Activated CD4-positive, alpha-beta memory T cell treated with anti-CD3 and anti-CD28 coated beads, Interleukin-2, amount 10 ng/mL, durations not matched to agents 7 days and 5 days (primary cell): ENCODE measurements at regions of chr7 and their contacts with region 1.

Region 1: DNA sequence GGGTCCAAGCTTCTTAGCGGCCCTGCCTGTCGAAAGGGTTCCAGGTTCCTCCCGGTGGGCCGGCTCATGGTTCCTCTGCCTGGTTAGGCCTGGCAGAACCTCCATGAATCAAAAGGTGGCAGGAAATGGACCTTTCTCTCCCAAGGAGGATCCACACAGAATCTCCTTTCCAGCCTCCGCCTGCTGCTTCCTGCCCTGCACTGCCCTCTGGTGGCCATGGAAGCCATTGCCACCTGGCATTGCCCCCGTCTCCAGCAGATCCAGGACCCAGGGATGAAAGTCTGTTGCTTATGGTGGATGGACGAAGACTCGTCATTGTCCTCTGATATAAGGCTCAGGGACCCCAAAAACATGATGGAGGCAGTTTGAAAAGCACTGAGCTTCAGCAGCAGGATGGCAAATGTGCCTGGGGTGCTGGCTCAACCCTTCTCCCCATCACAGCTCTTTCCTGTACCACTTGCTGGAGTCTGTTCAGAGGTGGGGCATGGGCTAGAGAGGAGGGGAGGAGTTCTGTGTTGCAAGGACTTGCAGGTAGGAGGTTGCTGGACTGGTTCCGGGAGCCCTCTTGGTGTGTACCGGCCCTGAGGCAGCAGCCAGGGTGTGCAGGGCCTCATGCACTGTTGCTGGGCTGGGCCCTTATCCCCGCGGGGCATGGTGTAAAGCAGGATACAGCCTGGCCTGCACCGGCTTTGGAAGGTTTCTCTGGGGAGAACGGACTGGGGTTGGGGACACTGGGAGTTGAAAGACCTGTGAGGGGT is 11.3 kb upstream of the INMT start:
- DNase-seq: peak; percentile 81
- H3K4me3 Mint-ChIP-seq: no peak overlapping the region
- H3K27ac Mint-ChIP-seq: no peak overlapping the region
- H3K4me1 Mint-ChIP-seq: peaks cover 33% of the 10 kb centered on the region
- H3K27me3 Mint-ChIP-seq: no peaks in the 10 kb centered on the region

Region 2: DNA sequence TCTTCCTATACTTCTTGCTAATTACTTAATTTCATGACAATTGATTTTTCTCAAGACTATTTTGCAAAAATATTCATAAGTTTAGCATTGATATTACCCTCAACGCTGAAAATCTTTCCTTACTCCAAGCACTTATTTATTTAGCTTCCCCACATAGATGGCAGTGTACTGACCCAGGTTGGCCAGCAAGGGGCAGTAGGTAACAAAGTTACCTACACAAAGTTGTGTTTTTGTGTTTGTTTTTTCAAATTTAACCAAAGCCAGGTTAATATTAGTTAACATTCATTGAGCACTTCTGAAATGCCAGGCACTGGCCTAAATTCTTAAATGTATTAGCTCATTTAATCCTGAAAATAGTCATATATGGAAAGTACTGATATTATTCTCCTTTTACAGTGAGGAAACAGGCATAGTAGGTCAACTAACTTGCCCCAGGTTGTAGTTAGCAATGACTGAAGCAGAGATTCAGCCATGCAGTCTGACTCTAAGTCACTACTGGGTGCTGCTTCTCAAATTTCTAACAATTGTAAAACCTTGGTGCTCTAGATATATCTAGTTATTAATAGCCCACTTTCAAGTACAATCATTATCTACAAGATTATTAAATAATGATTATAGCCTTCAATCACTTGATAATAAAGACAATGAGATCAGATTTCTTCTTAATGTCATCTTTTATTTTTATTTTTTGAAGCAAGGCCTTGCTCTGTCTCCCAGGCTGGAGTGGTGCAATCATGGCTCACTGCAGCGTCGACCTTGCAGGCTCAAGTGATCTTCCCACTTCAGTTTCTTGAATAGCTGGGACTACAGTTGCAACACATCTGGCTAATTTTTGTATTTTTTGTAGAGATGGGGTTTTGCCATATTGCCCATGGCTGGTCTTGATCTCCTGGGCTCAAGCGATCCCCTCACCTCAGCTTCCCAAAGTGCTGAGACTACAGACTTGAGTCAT is 230.2 kb before region 1 on chr7:
- CTCF ChIA-PET with region 1: interaction called, 11 read pairs
- POLR2A ChIA-PET with region 1: no interaction called
- DNase-seq: peak; percentile 40
- H3K4me3 Mint-ChIP-seq: no peak overlapping the region
- H3K27ac Mint-ChIP-seq: no peak overlapping the region
- H3K4me1 Mint-ChIP-seq: peaks cover 21% of the 10 kb centered on the region
- H3K27me3 Mint-ChIP-seq: no peaks in the 10 kb centered on the region

Region 3: DNA sequence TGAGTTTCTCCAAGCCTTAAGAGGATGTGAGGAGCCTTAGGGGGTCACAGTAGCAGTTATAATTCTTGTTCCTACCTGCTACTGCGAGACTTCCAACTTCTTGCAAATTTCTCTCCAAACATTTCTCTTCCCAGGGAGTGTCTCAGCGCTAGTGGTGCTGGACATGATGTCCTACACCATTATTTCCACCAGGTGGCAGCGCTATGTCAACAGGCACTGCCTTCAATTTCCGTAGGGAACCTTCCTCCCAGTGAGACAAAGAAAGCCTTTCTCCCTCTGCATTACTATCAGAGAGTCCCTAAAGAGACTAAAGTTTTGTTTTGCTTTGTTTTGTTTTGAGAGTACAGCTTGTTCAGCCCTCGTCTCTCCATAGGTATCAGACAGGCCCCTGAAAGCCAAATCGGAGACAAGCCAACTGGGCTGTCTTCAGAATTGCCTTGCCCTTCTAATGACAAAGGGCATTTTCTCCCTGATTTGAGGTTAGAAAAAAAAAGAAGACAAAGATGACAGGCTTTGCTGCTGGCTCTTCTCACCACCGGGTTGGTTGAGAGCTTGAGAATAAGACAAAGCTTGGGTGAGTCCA is 191.8 kb before region 1 on chr7:
- CTCF ChIA-PET with region 1: interaction called, 14 read pairs
- POLR2A ChIA-PET with region 1: no interaction called
- DNase-seq: peak; percentile 40
- H3K4me3 Mint-ChIP-seq: no peak overlapping the region
- H3K27ac Mint-ChIP-seq: no peak overlapping the region
- H3K4me1 Mint-ChIP-seq: peaks cover 2% of the 10 kb centered on the region
- H3K27me3 Mint-ChIP-seq: no peaks in the 10 kb centered on the region

Region 4: GRCh38 chr7:30655096-30655970 is 85.3 kb before region 1 on chr7:
- CTCF ChIA-PET with region 1: no interaction called
- POLR2A ChIA-PET with region 1: no interaction called
- DNase-seq: no peak
- H3K4me3 Mint-ChIP-seq: no peak overlapping the region
- H3K27ac Mint-ChIP-seq: no peak overlapping the region
- H3K4me1 Mint-ChIP-seq: no peaks in the 10 kb centered on the region
- H3K27me3 Mint-ChIP-seq: no peaks in the 10 kb centered on the region

Region 5: DNA sequence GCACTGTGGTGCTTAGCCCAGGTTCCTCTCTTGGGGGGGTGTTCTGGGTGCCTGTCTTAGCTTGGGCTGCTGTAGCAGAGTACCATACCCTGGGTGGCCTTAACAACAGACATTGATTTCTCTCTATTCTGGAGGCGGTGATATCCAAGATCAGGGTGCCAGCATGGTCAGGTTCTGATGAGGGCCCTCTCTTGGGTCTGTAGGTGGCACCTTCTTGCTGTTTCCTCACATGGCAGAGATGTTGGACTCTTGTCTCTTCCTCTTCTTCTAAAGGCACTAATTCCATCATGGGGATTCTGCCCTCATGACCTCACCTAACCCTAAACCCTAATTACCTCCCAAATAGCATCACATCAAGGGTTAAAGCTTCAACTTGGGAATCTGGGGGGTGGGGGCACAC is 38.4 kb before region 1 on chr7:
- CTCF ChIA-PET with region 1: interaction called, 95 read pairs
- POLR2A ChIA-PET with region 1: interaction called, 3 read pairs
- DNase-seq: peak; percentile 48
- H3K4me3 Mint-ChIP-seq: no peak overlapping the region
- H3K27ac Mint-ChIP-seq: no peak overlapping the region
- H3K4me1 Mint-ChIP-seq: peaks cover 14% of the 10 kb centered on the region
- H3K27me3 Mint-ChIP-seq: peaks cover 3% of the 10 kb centered on the region

Region 6: DNA sequence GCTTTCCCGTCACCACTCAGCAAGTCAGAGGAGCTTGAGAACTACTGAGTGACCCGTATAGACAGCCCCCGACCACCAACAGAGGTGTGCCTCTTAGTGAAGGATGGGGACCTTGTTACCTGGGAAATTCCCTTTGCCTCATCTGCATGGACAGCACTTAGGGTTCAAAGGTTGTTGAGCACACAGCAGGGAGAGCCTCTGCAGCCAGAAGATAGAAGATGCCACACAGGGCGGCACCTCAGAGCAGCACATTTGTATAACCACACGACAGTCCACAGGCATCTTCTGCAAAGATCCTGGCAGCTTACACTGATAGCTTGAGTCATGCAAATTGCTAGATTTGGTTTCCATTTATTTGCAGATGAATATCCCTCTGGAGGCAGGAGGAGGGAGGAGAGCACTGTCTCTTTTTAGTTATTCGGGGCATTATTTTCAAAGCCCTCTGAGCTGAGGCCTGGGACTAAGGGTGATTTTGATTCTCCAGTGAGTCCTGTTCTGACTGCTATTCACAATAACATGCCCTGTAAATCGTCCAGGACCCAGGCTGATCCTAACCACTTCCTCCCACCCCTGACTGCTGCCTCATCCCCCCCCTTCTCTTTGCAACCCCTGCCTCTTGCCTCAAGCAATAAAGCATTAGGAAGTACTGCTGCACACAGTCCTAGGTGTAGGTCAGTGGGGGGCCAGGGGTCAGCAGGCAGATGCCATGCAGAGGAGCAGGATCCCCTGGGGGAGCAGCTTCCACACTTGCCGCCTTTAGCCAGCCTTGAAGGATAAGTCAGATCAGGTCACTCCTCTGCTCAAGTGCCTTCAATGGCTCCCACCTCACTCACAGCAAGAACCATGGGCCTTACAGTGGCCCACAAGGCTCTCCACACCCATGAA is 13.3 kb before region 1 on chr7:
- CTCF ChIA-PET with region 1: interaction called, 69 read pairs
- POLR2A ChIA-PET with region 1: interaction called, 35 read pairs
- DNase-seq: peak; percentile 82
- H3K4me3 Mint-ChIP-seq: peak overlapping the region; percentile 73
- H3K27ac Mint-ChIP-seq: peak overlapping the region; percentile 93
- H3K4me1 Mint-ChIP-seq: peaks cover 42% of the 10 kb centered on the region
- H3K27me3 Mint-ChIP-seq: no peaks in the 10 kb centered on the region

Region 7: DNA sequence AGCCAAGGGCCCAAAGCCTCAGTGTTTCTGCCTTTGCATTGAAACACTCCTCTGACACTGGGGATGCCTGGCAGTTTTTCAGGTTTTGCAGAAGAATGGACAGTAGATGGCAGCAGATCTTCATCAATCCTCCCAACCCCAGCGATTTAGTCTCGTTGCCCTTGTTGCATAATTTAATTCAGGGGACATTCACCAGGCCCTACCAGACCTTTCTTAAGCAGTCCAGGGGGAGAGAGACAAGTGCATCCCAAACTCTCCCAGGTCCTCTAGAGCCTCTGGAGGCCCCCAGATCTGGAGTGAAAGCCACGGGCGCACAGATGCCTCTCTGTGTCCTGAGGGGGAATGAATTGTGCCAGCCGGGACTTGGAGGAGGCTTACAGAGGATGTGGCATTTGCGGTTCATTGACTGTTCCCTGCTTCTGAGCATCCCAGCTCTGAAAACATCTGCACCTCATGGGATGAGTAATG is 60.2 kb after region 1 on chr7:
- CTCF ChIA-PET with region 1: no interaction called
- POLR2A ChIA-PET with region 1: no interaction called
- DNase-seq: peak; percentile 47
- H3K4me3 Mint-ChIP-seq: no peak overlapping the region
- H3K27ac Mint-ChIP-seq: no peak overlapping the region
- H3K4me1 Mint-ChIP-seq: peaks cover 23% of the 10 kb centered on the region
- H3K27me3 Mint-ChIP-seq: no peaks in the 10 kb centered on the region